ENCODE measurements at regions of chr7 and their contacts with region 1.

Region 1: DNA sequence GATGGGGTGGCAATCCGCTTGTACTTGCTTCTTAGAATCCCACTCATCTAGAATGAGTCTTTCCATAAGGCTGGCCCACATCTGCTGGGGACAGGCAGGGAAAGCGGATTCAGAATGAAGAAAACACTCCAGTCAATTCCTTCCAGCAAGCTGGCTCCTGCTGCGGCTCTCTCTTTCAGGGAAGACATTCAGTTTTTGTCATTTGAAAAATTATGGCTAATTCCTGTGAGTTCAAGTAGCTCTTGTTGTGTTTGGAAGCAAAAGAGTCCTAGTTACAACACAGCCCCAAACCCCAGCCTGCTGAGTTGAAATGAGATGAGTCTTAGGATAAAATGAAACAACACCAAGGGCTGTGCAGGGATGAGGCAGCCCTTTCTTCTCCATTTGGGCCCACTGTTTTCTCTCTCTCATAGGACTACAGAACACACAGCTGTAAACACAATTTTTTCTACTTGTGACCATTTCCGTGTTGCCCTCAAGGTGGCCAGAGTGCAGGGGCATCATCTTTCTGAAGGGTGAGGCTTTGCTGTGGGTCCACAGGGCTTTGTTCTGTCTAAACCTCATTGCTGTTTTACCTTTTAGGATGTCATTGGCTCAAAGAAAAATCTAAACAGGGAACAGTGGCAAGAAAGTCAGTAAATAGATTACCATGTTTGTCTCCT is 90.8 kb upstream of the EEPD1 start:
- DNase-seq: no peak
- ATAC-seq: no peak
- H3K4me3 ChIP-seq: no peak overlapping the region
- H3K27ac ChIP-seq: no peak overlapping the region
- H3K4me1 ChIP-seq: no peaks in the 10 kb centered on the region
- H3K27me3 ChIP-seq: no peaks in the 10 kb centered on the region
- CTCF ChIP-seq: no peak

Region 2: DNA sequence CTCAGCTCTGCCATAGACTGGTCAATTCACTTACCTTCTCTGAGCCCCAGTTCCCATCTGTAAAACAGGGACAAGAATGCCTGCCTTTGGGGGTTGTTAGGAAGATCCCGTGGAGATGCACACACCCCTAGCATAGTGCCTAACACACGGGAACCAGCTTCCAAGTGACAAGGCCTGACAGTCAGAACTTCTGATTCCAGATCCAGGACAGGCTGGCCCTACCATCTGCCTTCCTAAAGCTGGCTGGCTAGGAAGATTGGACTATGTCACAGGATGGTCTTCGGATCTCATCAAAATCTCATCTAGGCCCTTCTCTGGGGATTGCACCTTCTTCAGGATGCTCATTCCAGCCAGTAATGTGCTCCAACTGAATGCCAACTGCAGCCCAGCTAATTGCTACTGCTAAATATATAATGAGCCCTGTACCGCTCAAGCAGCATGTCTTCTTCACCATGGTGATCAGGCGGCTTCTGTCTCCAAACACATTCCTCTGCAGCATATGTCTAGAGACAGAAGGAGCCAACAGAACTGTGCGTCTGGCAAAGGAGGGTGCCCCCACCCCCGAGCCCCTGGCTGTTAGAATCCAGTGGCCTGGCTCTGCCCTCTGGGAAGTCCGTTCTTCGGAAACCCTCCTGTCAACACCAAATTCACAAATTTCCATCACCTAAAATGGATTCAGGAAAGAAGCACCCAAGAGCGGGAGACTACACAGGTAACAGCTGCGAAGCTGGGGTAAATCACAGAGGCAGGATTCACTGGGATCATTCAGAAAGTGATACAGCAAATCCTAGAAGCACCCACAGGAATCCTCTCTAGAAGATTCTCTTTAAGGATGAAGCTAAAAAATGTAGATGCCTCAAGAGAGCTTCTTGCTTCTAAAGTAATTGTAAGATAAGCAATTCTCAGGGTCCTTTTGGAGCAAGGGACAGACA is 51.4 kb before region 1 on chr7:
- CTCF ChIA-PET with region 1: interaction called, 3 read pairs
- POLR2A ChIA-PET with region 1: interaction called, 10 read pairs
- in situ Hi-C with region 1: no loop called
- intact Hi-C with region 1: no loop called
- DNase-seq: no peak
- ATAC-seq: no peak; the same call in 1 of the 2 replicates
- H3K4me3 ChIP-seq: no peak overlapping the region
- H3K27ac ChIP-seq: no peak overlapping the region
- H3K4me1 ChIP-seq: no peaks in the 10 kb centered on the region
- H3K27me3 ChIP-seq: no peaks in the 10 kb centered on the region
- CTCF ChIP-seq: no peak

Region 3: GRCh38 chr7:36272567-36273269 is 210.4 kb after region 1 on chr7:
- CTCF ChIA-PET with region 1: no interaction called
- POLR2A ChIA-PET with region 1: no interaction called
- in situ Hi-C with region 1: no loop called
- intact Hi-C with region 1: no loop called
- DNase-seq: no peak
- ATAC-seq: peak; percentile 24
- H3K4me3 ChIP-seq: no peak overlapping the region
- H3K27ac ChIP-seq: peak overlapping the region; percentile 71
- H3K4me1 ChIP-seq: peaks cover 53% of the 10 kb centered on the region
- H3K27me3 ChIP-seq: no peaks in the 10 kb centered on the region
- CTCF ChIP-seq: no peak